ENCODE measurements at regions of chr17 and their contacts with region 1.

Region 1: DNA sequence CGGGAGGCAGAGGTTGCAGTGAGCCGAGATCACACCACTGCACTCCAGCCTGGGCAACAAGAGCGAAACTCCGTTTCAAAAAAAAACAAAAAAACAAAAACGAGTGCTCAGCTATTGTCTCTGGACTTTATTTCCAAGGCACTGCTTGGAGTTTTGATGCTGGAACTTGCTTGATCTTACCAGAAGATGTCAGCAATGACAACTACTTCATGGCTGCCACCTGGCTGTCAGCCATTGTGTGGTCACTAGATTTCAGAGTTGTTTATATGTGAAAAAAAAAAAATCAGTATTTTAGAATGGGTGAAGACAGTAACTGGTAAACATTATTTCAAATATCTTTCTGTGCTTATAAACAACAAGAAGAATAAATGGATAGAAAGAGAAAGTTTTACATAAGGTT is 26.3 kb upstream of the OR4D1 start:
- DNase-seq: peak in 8 of 9 experiments; percentile 24 to 81 (median 49)
- ATAC-seq: peak; percentile 74
- H3K4me3 ChIP-seq: no peak overlapping the region
- H3K4me3 Mint-ChIP-seq: no peak overlapping the region
- H3K27ac ChIP-seq: no peak overlapping the region
- H3K27ac Mint-ChIP-seq: no peak overlapping the region
- H3K4me1 ChIP-seq: peaks cover 5% of the 10 kb centered on the region
- H3K4me1 Mint-ChIP-seq: peaks cover 12% of the 10 kb centered on the region
- H3K27me3 ChIP-seq: no peaks in the 10 kb centered on the region
- H3K27me3 Mint-ChIP-seq: peaks cover 12% of the 10 kb centered on the region
- CTCF ChIP-seq: peak; percentile 51

Region 2: DNA sequence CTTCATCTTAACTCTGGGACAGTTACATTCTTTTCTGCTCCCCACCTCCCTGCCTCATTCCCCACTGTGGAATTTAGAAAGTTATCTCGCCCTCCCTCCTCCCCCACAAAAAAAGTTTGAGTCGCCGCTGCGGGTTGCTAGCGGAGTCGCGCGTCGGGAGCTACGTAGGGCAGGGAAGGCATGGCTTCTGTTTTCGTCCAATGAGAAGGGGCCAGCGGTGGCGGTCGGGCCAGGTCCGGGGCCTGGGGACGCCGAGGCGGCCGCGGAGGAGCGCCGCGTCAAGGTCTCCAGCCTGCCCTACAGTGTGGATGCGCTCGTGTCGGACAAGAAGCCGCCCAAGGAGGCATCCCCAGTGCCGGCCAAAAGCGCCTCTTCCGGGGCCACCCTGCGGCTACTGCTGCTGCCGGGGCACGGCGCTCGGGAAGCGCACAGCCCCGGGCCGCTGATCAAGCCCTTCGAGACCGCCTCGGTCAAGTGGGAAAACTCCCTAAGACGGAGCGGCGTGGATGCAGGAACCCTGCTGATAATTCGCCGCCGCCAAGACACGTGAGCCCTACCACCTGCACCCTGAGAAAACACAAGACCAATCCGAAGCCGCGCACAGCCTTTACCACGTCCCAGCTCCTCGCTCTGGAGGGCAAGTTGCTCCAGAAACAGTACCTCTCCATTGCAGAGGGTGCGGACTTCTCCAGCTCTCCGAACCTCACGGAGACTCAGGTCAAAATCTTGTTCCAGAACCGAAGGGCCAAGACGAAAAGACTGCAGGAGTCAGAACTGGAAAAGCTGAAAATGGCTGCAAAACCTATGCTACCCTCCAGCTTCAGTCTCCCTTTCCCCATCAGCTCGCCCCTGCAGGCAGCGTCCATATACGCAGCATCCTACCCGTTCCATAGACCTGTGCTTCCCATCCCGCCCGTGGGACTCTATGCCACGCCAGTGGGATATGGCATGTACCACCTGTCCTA is 35.2 kb after region 1 on chr17:
- CTCF ChIA-PET with region 1: interaction called, 217 read pairs
- POLR2A ChIA-PET with region 1: interaction called, 4 read pairs
- intact Hi-C with region 1: loop called in 1 of 2 experiments (anchors 5 kb)
- DNase-seq: peak; percentile 19 to 81 (median 56)
- ATAC-seq: peak; percentile 54
- H3K4me3 ChIP-seq: peak overlapping the region; percentile 73 to 79
- H3K4me3 Mint-ChIP-seq: peak overlapping the region; percentile 85
- H3K27ac ChIP-seq: peak overlapping the region; percentile 84 to 92
- H3K27ac Mint-ChIP-seq: peak overlapping the region; percentile 87
- H3K4me1 ChIP-seq: peaks cover 60% of the 10 kb centered on the region
- H3K4me1 Mint-ChIP-seq: peaks cover 69% of the 10 kb centered on the region
- H3K27me3 ChIP-seq: no peaks in the 10 kb centered on the region
- H3K27me3 Mint-ChIP-seq: no peaks in the 10 kb centered on the region
- CTCF ChIP-seq: no peak

Measured in CD8-positive, alpha-beta T cell (primary cell).